Astrocyte of the cerebellum (primary cell): ENCODE measurements at regions of chr1 and their contacts with region 1.

Region 1: DNA sequence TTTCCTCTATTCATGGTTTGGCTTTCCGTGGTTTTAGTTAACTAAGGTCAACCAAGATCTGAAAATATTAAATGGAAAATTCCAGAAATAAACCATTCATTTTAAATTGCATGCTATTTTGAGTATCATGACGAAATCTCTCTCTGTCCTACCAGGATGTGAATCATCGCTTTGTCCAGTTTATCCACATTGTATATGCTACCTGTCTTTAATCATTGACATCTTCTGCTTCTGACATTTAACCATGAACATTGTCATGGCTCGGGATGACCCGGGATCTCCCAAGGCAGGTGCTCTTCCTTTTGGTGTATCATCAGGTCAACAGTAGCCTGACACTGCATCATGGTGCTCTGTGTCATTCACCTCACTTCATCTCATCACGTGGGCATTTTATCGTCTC is 125.5 kb upstream of the HNRNPU start:
- DNase-seq: no peak
- H3K4me3 ChIP-seq: no peak overlapping the region
- CTCF ChIP-seq: no peak

Region 2: GRCh38 chr1:244835276-244836134 is 154.3 kb before region 1 on chr1 and contains the start of gene COX20:
- in situ Hi-C with region 1: no loop called
- DNase-seq: peak; percentile 73
- H3K4me3 ChIP-seq: peak within 1 kb of the TSS; percentile 63
- CTCF ChIP-seq: no peak

Region 3: GRCh38 chr1:245031041-245031440 is 41.2 kb after region 1 on chr1:
- in situ Hi-C with region 1: loop called (anchors 5 kb)
- DNase-seq: no peak
- H3K4me3 ChIP-seq: no peak overlapping the region
- CTCF ChIP-seq: no peak